ENCODE measurements at regions of chr11 and their contacts with region 1.

Region 1: DNA sequence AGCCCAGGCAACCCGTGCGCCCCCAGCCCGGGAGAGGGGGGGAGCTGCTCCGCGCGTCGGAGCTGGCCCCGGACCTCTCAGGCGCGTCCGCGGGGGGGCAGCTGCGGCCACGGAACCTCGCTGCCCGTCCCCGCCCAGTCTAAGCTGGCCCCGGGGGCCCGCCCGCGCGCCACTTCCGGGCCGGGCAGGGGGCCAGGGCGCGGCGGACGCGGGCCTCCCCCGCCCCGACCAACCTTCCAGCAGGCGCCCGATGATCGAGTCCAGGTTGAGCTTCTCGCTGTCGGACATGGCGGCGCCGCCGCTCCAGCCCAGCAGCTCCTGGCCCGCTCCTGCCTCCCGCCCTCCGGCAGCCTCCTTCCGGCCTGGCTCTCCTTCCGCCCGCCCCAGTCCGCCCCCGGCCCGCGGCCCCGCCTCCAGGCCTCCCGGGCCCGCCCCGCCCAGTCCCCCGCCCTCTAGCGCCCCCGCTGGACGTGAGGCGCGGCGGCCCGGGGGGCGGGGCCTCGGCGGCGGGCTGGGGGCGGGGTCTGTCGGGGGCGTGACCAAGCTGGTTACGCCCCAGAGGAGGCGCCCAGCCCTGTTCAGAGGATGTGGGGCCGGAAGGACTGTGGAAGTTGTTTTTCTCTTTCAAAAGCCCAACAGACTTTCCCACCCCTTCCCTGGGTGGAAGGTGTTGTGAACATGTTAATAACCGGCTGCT is at the start of gene PPP1CA:
- DNase-seq: peak; percentile 87 to 89
- ATAC-seq: peak; percentile 84 to 87
- H3K4me3 ChIP-seq: peak within 1 kb of the TSS; percentile 80
- H3K27ac ChIP-seq: peak within 1 kb of the TSS; percentile 89 to 98
- H3K4me1 ChIP-seq: peaks cover 15% of the 10 kb centered on the region
- CTCF ChIP-seq: peak; percentile 75
- EP300 ChIP-seq: no peak
- POLR2A ChIP-seq: peak; percentile 78
- RAD21 ChIP-seq: peak; percentile 12 to 63; a peak in 4 of 5 replicates
- polyA plus RNA-seq, gene PPP1CA: 174 and 178 TPM in 2 replicates

Region 2: GRCh38 chr11:67345920-67346799 is 55.5 kb before region 1 on chr11:
- CTCF ChIA-PET with region 1: interaction called, 1,913 read pairs
- POLR2A ChIA-PET with region 1: interaction called, 4 read pairs
- DNase-seq: peak; percentile 83 to 97
- ATAC-seq: peak; percentile 84 to 90
- H3K4me3 ChIP-seq: no peak overlapping the region
- H3K27ac ChIP-seq: peak overlapping the region; percentile 65 to 82
- H3K4me1 ChIP-seq: peaks cover 62% of the 10 kb centered on the region
- CTCF ChIP-seq: peak; percentile 96
- EP300 ChIP-seq: peak; percentile 23 to 54; a peak in 1 of 5 replicates
- POLR2A ChIP-seq: no peak
- RAD21 ChIP-seq: peak; percentile 88

Region 3: GRCh38 chr11:67373925-67374618 is 27.6 kb before region 1 on chr11:
- CTCF ChIA-PET with region 1: interaction called, 626 read pairs
- POLR2A ChIA-PET with region 1: interaction called, 10 read pairs
- DNase-seq: peak; percentile 96 to 100
- ATAC-seq: peak; percentile 41 to 71
- H3K4me3 ChIP-seq: peak overlapping the region; percentile 68
- H3K27ac ChIP-seq: peak overlapping the region; percentile 95 to 100
- H3K4me1 ChIP-seq: peaks cover 73% of the 10 kb centered on the region
- CTCF ChIP-seq: peak; percentile 29
- EP300 ChIP-seq: peak; percentile 87 to 93; a peak in 4 of 5 replicates
- POLR2A ChIP-seq: peak; percentile 36
- RAD21 ChIP-seq: peak; percentile 41 to 58

Region 4: GRCh38 chr11:67415501-67416304 is 14.1 kb after region 1 on chr11 and contains the start of gene CARNS1:
- CTCF ChIA-PET with region 1: interaction called, 36 read pairs
- POLR2A ChIA-PET with region 1: interaction called, 12 read pairs
- DNase-seq: no peak
- ATAC-seq: no peak
- H3K4me3 ChIP-seq: peak within 1 kb of the TSS; percentile 36
- H3K27ac ChIP-seq: peak within 1 kb of the TSS; percentile 46 to 84; a peak in 4 of 6 replicates
- H3K4me1 ChIP-seq: peaks cover 35% of the 10 kb centered on the region
- CTCF ChIP-seq: no peak
- EP300 ChIP-seq: no peak
- POLR2A ChIP-seq: no peak
- RAD21 ChIP-seq: no peak
- polyA plus RNA-seq, gene CARNS1: 0.08 and 0.15 TPM in 2 replicates

Region 5: GRCh38 chr11:67439321-67439883 is 37.8 kb after region 1 on chr11:
- CTCF ChIA-PET with region 1: interaction called, 6 read pairs
- POLR2A ChIA-PET with region 1: interaction called, 12 read pairs
- DNase-seq: peak; percentile 53 to 68
- ATAC-seq: peak; percentile 30 to 66; a peak in 5 of 6 replicates
- H3K4me3 ChIP-seq: no peak overlapping the region
- H3K27ac ChIP-seq: no peak overlapping the region; a peak in 1 of 6 replicates
- H3K4me1 ChIP-seq: peaks cover 24% of the 10 kb centered on the region
- CTCF ChIP-seq: peak; percentile 29; the same call in 2 of the 3 replicates
- EP300 ChIP-seq: no peak
- POLR2A ChIP-seq: no peak
- RAD21 ChIP-seq: peak in 1 of 2 experiments; percentile 25; a peak in 1 of 5 replicates

Region 6: DNA sequence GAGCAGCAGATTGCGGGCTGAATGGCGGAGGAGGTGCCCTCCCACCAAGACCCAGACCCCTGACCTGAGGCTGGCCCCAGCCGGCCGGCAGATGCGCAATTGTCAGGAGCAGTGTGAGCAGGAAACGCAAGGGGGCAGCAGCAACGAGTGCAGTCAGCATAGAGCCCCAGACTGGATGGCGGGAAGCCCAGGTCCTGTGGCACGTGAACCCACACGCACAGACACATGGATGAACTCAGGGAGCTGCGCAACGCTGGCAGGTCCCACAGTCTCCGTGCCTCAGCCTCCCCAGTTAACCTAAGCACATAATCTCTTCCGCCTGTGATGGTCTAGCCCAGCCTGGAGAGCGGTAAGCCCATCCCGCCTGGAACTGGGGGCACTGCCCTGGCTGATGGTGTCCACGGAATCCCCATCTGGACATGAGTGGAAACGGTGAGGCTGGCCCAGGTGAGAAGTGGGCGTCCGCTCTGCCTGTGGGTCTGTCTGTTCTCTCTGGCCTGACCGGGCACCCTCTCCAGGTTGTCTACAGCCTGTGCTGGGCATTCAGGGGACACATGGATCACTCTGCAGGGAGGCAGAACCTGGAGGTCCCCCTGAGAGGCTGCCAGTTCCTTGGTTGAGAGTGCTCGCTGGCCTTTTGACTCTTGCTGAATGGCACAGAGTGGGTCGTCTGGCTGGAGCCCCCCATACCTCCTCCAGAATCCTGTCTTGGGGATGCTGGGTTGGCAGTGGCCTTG is 238.5 kb after region 1 on chr11:
- CTCF ChIA-PET with region 1: no interaction called
- POLR2A ChIA-PET with region 1: no interaction called
- DNase-seq: peak; percentile 71 to 77
- ATAC-seq: peak; percentile 78 to 93
- H3K4me3 ChIP-seq: no peak overlapping the region
- H3K27ac ChIP-seq: no peak overlapping the region
- H3K4me1 ChIP-seq: no peaks in the 10 kb centered on the region
- CTCF ChIP-seq: peak; percentile 61
- EP300 ChIP-seq: no peak
- POLR2A ChIP-seq: no peak
- RAD21 ChIP-seq: peak; percentile 45 to 54

Measured in A549 (cell line).